Activated B cell treated with CpG ODN at 0.5 μM for 24 hours (primary cell): ENCODE measurements at regions of chr5 and their contacts with region 1.

Region 1: GRCh38 chr5:133111299-133111698 is 59.5 kb downstream of the HSPA4 start:
- DNase-seq: peak; percentile 73
- ATAC-seq: peak; percentile 53
- H3K4me3 Mint-ChIP-seq: peak overlapping the region; percentile 33
- H3K27ac Mint-ChIP-seq: peak overlapping the region; percentile 68
- H3K4me1 Mint-ChIP-seq: peaks cover 45% of the 10 kb centered on the region
- H3K27me3 Mint-ChIP-seq: no peaks in the 10 kb centered on the region
- CTCF ChIP-seq: peak; percentile 77

Region 2: DNA sequence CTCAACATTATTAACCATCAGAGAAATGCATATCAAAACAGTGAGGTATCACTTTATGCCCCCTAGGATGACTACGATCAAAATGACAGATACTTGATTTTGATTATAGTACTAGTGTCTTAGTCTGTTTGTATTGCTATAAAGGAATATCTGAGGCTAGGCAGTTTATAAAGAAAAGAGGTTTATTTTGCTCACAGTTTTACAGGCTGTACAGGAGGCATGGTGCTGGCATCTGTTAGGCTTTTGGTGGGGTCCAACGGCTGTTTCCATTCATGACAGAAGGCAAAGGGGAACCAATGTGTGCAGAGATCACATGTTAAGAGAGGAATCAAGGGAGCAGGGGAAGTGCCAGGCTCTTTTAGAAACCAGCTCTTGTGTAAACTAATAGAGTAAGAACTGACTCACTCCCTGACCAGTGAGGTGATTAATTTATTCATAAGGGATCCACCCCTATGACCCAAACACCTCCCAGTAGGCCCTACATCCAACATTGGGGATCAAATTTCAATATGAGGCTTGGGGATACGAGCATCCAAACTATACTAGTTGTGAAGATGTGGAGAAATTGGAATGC is 131.8 kb before region 1 on chr5:
- CTCF ChIA-PET with region 1: no interaction called
- POLR2A ChIA-PET with region 1: interaction called, 11 read pairs
- intact Hi-C with region 1: no loop called
- DNase-seq: no peak
- ATAC-seq: no peak
- H3K4me3 Mint-ChIP-seq: no peak overlapping the region
- H3K27ac Mint-ChIP-seq: no peak overlapping the region
- H3K4me1 Mint-ChIP-seq: peaks cover 2% of the 10 kb centered on the region
- H3K27me3 Mint-ChIP-seq: no peaks in the 10 kb centered on the region
- CTCF ChIP-seq: no peak

Region 3: DNA sequence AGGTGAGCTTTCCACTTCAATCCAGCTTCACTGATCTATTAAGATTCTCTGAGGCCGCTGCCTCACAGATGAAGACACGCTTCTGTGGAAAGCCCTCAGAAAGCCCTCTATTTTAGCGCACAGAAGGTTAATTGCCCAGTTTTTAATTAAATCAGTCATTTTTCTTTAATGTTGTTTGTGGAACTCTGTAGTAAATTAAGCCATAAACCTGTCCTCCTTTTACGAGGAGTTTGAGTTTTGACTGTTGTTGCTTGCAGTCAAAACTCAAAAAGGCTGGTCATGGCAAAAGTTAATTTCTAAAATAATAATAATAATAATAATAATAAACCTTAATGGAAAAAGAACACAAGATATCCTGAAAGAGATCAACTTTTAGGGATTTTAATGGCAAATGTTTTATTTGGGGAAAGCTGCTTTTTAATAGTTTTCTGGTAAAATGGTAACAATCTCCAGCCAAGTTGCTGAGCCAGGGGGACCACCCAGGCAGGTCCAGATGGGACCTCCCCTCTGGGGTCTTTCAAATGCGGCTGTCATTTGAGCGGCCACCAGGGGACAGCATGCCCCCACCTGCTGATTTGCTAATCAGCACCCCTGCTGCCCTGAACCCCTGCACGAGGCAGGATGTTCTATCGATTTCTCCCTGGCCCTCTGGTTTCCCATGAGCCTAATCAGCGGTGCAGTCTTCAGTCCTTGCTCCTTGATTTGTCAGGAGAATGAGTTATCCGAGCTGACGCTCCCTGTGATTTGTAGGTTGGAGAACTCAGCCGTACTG is 253.8 kb after region 1 on chr5:
- CTCF ChIA-PET with region 1: interaction called, 8 read pairs
- POLR2A ChIA-PET with region 1: no interaction called
- intact Hi-C with region 1: loop called (anchors 1 kb)
- DNase-seq: no peak
- ATAC-seq: peak; percentile 50
- H3K4me3 Mint-ChIP-seq: no peak overlapping the region
- H3K27ac Mint-ChIP-seq: no peak overlapping the region
- H3K4me1 Mint-ChIP-seq: no peaks in the 10 kb centered on the region
- H3K27me3 Mint-ChIP-seq: peaks cover 7% of the 10 kb centered on the region
- CTCF ChIP-seq: no peak

Region 4: DNA sequence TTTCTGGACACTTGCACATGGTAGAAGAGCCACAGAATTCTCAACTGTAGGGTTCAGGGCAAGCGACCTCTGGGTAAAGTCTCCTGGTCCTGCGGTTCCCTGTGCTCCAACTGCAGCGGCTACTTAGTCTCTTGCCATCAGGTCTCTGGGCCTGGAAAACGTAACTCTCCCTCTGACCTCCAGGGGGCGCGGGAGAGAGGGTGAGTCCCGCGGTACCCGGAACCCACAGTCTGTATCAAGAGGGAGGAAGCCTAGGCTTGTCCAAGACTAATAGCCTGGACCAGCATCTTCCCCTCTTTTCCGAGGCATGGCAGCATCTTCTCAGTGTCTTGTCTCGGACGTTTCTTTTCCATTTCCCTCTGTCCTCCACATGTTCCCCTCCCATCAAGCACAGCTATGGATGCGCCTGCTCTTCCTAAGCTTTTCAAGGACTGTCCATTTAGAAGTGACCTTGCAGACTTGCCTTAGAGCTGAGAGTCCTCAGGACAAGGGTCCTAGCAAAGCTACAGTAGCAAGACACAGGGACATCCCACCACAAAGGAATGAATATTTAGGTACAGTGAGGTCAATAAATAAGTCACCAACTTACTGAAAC is 441.7 kb after region 1 on chr5:
- CTCF ChIA-PET with region 1: interaction called, 4 read pairs
- POLR2A ChIA-PET with region 1: no interaction called
- intact Hi-C with region 1: loop called (anchors 10 kb)
- DNase-seq: peak; percentile 46
- ATAC-seq: peak; percentile 71
- H3K4me3 Mint-ChIP-seq: no peak overlapping the region
- H3K27ac Mint-ChIP-seq: no peak overlapping the region
- H3K4me1 Mint-ChIP-seq: no peaks in the 10 kb centered on the region
- H3K27me3 Mint-ChIP-seq: peaks cover 33% of the 10 kb centered on the region
- CTCF ChIP-seq: no peak

Region 5: GRCh38 chr5:133968049-133968980 is 857.0 kb after region 1 on chr5 and contains the start of gene C5orf15:
- CTCF ChIA-PET with region 1: interaction called, 3 read pairs
- POLR2A ChIA-PET with region 1: interaction called, 7 read pairs
- intact Hi-C with region 1: loop called (anchors 1 kb)
- DNase-seq: peak; percentile 83
- ATAC-seq: peak; percentile 90
- H3K4me3 Mint-ChIP-seq: peak within 1 kb of the TSS; percentile 95
- H3K27ac Mint-ChIP-seq: peak within 1 kb of the TSS; percentile 96
- H3K4me1 Mint-ChIP-seq: peaks cover 58% of the 10 kb centered on the region
- H3K27me3 Mint-ChIP-seq: no peaks in the 10 kb centered on the region
- CTCF ChIP-seq: no peak
- total RNA-seq, gene C5orf15: 25.5 and 25.7 TPM in 2 replicates

Region 6: DNA sequence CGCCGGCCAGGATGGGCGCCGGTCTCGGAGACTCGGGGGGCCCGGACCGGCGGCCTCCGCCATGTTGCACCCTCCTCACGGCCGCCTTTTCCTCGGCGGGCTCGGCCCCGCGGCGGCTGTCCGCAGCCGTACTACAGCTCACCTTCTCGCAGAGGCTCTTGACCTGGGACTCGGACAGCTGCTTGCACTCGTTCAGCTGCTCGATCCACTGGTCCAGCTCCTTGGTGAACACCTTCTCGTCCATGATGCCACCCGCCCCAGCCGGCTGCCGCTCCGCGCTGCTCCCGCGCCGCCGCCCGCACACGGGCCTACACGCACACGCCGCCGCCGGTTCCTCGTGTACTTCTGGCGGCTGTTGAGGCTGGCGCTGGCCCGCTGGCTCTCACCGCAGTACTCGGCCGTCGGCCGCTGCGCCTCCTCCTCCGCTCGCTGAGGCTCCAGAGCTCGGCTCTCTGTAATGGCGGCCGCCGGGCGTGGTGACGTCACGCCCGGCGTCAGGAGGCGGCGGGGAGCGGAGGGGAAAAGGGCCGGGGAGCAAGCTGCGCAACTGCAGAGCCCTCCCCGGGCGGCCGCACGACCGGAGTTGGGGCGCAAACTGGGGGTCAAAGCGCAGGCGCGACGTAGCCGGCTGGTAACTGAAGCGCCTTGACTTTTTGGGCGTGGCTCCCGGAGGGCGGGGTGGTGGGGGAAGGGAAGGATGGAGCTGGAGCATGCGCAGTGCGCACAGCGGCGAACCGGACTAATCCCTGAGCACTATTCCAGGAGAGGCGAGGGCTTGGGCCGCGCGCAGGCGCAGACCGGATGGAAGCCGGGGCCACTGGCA is 1114.5 kb after region 1 on chr5 and contains the start of gene PPP2CA:
- CTCF ChIA-PET with region 1: no interaction called
- POLR2A ChIA-PET with region 1: no interaction called
- intact Hi-C with region 1: loop called (anchors 10 kb)
- DNase-seq: peak; percentile 100
- ATAC-seq: peak; percentile 79
- H3K4me3 Mint-ChIP-seq: peak within 1 kb of the TSS; percentile 94
- H3K27ac Mint-ChIP-seq: peak within 1 kb of the TSS; percentile 95
- H3K4me1 Mint-ChIP-seq: peaks cover 51% of the 10 kb centered on the region
- H3K27me3 Mint-ChIP-seq: no peaks in the 10 kb centered on the region
- CTCF ChIP-seq: no peak
- total RNA-seq, gene PPP2CA: 103 and 118 TPM in 2 replicates